ENCODE measurements at regions of chr9 and their contacts with region 1.

Region 1: GRCh38 chr9:112747094-112747493 is 3.5 kb upstream of the SNX30 start:
- DNase-seq: no peak
- H3K4me3 ChIP-seq: no peak overlapping the region
- CTCF ChIP-seq: no peak

Region 2: DNA sequence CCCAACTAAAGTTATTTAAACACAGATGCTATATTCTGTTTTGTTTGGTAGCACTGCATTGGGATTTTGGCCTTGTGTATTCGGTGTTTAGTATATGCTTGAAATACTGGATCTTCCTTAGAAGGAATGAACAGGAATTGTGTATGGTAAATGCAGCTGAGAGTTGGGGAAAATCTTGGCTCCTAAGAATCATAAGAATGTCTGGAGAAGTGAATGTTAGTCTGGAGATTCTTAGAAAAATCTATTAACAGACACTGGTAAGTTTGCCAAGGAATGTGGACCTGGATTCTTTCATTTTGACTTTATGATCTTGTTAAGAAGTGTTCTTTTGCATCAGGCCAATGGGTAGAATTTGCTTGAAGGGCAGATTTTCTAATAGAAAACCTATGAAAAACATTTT is 42.4 kb after region 1 on chr9:
- in situ Hi-C with region 1: loop called (anchors 5 kb)
- DNase-seq: no peak
- H3K4me3 ChIP-seq: no peak overlapping the region
- CTCF ChIP-seq: no peak

Measured in astrocyte of the cerebellum (primary cell).